ENCODE measurements at regions of chr19 and their contacts with region 1.

Region 1: DNA sequence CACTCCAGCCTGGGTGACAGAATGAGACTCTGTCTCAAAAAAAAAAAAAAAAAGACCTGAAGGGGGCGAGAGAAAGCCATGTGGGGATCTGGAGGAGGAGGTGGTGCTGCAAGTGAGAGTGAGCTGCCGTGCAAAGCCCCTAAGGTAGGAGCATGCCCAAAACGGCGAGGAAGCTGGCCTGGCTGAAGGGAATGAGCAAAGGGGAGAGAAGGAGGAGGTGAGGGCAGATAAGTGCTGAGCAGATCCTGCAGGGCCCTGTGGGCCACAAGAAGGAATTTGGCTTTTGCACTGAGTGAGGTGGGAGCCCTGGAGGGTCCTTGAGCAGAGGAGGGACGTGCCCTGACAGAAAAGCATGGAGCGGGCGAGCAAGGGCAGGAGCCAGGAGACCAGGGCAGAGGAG is 19.4 kb upstream of the ADGRE5 start:
- DNase-seq: no peak
- H3K4me3 ChIP-seq: no peak overlapping the region
- H3K27ac ChIP-seq: peak overlapping the region; percentile 67 to 81
- H3K4me1 ChIP-seq: peaks cover 0 to 38% (median 17%) of the 10 kb centered on the region in 4 donors
- H3K27me3 ChIP-seq: no peaks in the 10 kb centered on the region
- CTCF ChIP-seq: peak in 1 of 2 experiments; percentile 42

Region 2: GRCh38 chr19:14325863-14326262 is 36.0 kb before region 1 on chr19:
- intact Hi-C with region 1: no loop called
- DNase-seq: no peak
- H3K4me3 ChIP-seq: no peak overlapping the region
- H3K27ac ChIP-seq: no peak overlapping the region
- H3K4me1 ChIP-seq: no peaks in the 10 kb centered on the region
- H3K27me3 ChIP-seq: no peaks in the 10 kb centered on the region
- CTCF ChIP-seq: no peak

Region 3: DNA sequence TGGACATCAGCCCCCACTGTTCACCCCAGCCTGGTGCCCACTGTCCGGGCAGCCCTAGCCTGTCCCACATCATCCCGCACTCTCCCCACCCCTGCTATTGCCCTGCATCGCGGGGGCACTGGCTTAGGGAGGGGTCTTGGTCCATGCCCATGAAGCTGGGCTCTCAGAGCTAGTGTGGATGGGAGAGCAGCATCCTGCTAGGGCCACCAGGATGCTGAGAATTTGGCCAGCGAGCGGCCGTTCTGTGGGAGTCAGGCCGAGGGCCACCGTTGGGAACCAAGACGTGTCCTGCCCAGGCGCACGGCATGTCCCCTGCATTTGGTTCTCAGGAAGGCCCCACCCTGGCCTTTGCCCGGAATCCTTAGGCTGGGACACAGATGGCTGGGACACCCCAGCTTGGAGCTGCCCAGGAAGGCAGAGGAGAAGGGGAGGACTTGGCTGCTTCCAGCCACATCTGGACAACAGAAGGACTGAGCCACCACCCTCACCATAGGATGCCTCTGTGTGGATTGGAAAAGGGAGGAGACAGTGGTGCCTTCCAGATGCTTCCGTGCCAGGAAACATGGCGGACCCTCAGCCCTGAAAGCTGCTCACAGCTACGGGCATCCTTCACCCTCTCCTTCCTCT is 34.0 kb after region 1 on chr19:
- intact Hi-C with region 1: no loop called
- DNase-seq: no peak
- H3K4me3 ChIP-seq: no peak overlapping the region
- H3K27ac ChIP-seq: no peak overlapping the region
- H3K4me1 ChIP-seq: no peaks in the 10 kb centered on the region
- H3K27me3 ChIP-seq: no peaks in the 10 kb centered on the region
- CTCF ChIP-seq: no peak

Region 4: DNA sequence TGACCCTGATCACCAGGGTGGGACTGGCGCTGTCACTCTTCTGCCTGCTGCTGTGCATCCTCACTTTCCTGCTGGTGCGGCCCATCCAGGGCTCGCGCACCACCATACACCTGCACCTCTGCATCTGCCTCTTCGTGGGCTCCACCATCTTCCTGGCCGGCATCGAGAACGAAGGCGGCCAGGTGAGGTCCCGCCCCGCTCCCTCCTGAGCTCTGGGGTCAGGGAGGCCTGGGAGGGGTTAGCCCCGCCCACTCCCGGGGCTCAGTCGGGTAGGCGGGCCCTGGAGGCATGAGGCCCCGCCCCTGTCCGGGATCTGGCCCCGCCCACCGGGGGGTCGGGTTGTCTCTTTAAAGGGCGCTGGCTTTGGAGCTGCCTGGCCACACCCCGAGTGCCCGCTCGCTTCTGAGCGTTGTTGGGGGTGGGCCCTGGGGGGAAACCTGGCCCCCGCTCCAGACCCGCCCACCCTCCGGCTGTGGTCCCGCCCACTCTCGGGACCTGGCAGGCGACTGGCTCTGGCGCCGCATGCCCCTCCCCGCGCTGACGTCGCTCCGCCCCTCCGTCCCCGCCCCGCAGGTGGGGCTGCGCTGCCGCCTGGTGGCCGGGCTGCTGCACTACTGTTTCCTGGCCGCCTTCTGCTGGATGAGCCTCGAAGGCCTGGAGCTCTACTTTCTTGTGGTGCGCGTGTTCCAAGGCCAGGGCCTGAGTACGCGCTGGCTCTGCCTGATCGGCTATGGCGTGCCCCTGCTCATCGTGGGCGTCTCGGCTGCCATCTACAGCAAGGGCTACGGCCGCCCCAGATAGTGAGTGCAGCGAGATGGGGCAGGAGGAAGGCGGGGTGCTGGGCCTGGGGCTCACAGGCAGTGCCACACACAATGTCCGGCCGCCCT is 44.2 kb after region 1 on chr19:
- intact Hi-C with region 1: loop called (anchors 2 kb)
- DNase-seq: peak; percentile 73 to 91
- H3K4me3 ChIP-seq: peak overlapping the region in 1 of 2 donors; percentile 30
- H3K27ac ChIP-seq: peak overlapping the region; percentile 66 to 67
- H3K4me1 ChIP-seq: peaks cover 0 to 26% (median 5%) of the 10 kb centered on the region in 4 donors
- H3K27me3 ChIP-seq: no peaks in the 10 kb centered on the region
- CTCF ChIP-seq: peak; percentile 88 to 96